Left colon (tissue), 2 donors: ENCODE measurements at regions of chrX and their contacts with region 1.

Region 1: DNA sequence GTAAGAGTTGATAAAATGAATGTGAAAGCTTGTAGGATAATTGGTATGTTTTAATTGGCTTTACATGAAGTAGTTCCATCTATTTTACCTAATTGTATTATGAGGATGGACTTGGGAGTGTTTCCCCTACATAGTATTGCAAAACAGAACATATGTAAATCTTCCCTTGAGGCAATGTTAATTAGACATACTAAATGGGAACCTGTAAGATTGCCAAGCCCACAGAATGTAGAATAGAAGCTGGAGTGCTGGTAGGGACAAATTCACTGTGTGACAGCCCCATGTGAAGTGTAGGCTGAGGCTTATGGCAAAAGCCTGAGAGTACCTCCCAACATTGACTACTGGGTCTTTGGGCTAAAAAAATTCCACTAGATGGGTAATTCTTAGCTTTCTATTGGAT is 615.0 kb upstream of the AMOT start:
- DNase-seq: no peak
- ATAC-seq: no peak

Region 2: DNA sequence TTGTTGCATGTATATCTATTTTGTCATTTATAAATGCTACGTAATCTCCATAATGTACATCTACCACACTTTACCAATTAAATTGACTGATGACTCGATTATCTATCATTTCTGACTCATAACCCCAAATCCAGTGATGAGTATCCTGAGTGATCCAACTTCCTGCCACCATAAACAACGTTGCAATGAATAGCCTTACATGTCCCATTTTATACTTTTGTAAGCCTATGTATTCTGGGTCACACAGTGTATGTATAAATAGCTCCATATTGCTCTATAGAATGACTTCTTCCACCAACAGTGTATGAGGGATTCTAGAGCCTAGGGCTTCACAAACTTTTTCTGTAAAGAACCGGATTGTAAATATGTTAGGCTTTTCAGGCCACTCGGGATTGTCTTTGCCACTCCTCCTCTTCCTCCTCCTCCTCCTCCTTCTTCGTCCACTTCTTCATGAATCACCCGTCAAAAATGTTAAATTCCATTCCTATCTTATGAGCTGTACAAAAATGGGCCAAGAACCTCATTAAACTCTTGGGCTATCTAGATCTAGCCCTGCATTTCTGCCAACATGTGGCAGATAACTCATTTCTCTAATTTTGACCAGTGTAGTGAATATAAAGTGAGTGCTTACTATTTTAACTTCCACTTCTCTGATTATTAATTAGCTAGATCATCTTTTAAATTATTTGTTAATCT is 57.3 kb after region 1 on chrX:
- intact Hi-C with region 1: loop called in 1 of 2 experiments (anchors 10 kb)
- DNase-seq: no peak
- ATAC-seq: no peak